CD8-positive, alpha-beta T cell (primary cell): ENCODE measurements at regions of chr1 and their contacts with region 1.

Region 1: DNA sequence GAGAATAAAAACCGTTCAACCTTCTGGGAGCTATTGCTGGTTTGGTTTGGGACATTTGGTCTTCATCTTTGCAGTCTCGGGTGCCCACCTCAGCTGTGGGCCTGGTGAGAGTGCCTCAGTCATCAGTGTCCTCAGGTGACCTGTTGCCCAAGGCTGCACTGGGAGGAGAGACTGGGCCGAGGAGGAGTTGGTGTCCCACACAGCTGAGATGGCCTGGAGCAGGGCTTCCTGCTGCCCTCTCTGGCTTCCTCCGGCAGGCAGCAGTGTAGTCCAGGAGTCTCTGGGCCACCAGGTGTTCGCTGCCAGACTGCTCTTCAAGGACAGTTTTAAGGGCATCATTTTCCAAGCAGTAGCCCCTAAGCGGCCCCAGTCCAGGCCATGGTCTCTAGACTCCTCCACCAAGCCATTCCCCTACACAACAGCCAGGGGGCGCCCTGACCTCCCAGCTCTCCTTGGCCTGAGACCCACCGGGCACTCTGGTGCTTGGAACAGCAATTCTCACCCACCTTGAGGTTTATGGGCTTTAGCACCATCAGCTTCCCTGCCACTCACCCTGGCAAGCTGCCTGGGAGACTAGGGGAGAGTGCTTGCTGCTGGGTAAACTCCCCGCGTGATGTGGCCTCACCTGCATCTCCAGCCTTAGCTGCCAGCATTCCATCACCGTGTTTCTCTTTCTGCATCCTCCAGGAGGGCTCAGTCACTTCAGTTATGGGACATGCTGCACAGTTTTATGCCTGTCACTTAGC is 9.1 kb upstream of the SYTL1 start:
- DNase-seq: peak; percentile 37 to 78 (median 64)
- ATAC-seq: peak; percentile 96
- H3K4me3 ChIP-seq: no peak overlapping the region
- H3K4me3 Mint-ChIP-seq: no peak overlapping the region
- H3K27ac ChIP-seq: no peak overlapping the region
- H3K27ac Mint-ChIP-seq: peak overlapping the region; percentile 27
- H3K4me1 ChIP-seq: peaks cover 13% of the 10 kb centered on the region
- H3K4me1 Mint-ChIP-seq: peaks cover 38% of the 10 kb centered on the region
- H3K27me3 ChIP-seq: no peaks in the 10 kb centered on the region
- H3K27me3 Mint-ChIP-seq: no peaks in the 10 kb centered on the region
- CTCF ChIP-seq: peak; percentile 86

Region 2: DNA sequence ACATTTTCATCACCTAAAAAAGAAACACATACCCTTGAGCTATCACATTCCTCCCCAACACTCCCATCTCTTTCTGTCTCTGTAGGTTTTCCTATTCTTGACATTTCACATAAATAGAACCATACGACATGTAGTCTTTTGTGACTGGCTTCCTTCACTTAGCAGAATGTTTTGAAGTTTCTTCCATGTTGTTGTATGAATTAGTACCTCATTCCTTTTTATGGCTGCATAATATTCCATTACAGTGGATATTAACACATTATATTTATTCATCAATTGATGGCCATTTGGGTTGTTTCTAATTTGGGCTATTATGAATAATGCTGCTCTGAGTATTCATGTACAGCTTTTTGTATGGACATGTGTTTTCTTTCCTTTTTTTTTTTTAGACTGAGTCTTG is 86.5 kb before region 1 on chr1:
- CTCF ChIA-PET with region 1: no interaction called
- POLR2A ChIA-PET with region 1: no interaction called
- intact Hi-C with region 1: no loop called
- DNase-seq: no peak
- ATAC-seq: no peak
- H3K4me3 ChIP-seq: no peak overlapping the region
- H3K4me3 Mint-ChIP-seq: no peak overlapping the region
- H3K27ac ChIP-seq: no peak overlapping the region
- H3K27ac Mint-ChIP-seq: peak overlapping the region; percentile 57
- H3K4me1 ChIP-seq: no peaks in the 10 kb centered on the region
- H3K4me1 Mint-ChIP-seq: peaks cover 11% of the 10 kb centered on the region
- H3K27me3 ChIP-seq: no peaks in the 10 kb centered on the region
- H3K27me3 Mint-ChIP-seq: no peaks in the 10 kb centered on the region
- CTCF ChIP-seq: no peak

Region 3: DNA sequence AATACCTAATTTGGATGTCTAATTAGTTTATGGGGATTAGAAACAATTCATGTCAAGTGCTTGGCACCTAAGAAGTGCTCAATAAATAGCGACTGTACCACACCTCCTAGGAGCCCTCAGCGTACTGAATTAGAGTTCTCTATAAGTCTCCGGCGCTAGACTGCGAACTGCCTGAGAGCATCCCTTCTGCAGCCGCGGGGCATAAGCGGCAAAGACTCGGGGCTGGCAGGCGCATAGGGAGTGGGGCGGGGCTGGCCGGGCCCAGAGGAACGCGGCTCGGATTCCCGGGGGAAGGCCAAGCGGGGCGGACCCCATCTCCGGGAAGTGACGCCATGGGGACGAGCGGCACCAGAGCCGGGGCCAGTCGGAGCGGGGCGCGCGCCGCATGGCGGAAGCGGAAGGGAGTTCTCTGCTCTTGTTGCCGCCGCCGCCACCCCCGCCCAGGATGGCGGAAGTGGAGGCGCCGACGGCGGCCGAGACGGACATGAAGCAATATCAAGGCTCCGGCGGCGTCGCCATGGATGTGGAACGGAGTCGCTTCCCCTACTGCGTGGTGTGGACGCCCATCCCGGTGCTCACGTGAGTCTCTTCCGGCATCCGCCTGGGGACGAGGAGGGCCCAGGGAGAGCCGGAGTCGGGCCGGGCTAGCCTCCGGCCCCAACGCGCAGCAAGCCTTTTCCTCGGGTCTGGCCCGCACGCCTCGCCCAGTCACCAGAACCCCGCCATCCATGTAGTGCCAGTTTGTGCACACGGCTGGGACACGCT is 10.7 kb before region 1 on chr1 and contains the start of gene TMEM222:
- CTCF ChIA-PET with region 1: interaction called, 25 read pairs
- POLR2A ChIA-PET with region 1: interaction called, 7 read pairs
- intact Hi-C with region 1: no loop called
- DNase-seq: peak; percentile 95 to 99 (median 97)
- ATAC-seq: peak; percentile 93
- H3K4me3 ChIP-seq: peak within 1 kb of the TSS; percentile 95 to 99
- H3K4me3 Mint-ChIP-seq: peak within 1 kb of the TSS; percentile 98
- H3K27ac ChIP-seq: peak within 1 kb of the TSS; percentile 88 to 95
- H3K27ac Mint-ChIP-seq: peak within 1 kb of the TSS; percentile 97
- H3K4me1 ChIP-seq: peaks cover 40% of the 10 kb centered on the region
- H3K4me1 Mint-ChIP-seq: peaks cover 48% of the 10 kb centered on the region
- H3K27me3 ChIP-seq: no peaks in the 10 kb centered on the region
- H3K27me3 Mint-ChIP-seq: no peaks in the 10 kb centered on the region
- CTCF ChIP-seq: no peak
- total RNA-seq, gene TMEM222: 24.1 to 25.2 TPM

Region 4: DNA sequence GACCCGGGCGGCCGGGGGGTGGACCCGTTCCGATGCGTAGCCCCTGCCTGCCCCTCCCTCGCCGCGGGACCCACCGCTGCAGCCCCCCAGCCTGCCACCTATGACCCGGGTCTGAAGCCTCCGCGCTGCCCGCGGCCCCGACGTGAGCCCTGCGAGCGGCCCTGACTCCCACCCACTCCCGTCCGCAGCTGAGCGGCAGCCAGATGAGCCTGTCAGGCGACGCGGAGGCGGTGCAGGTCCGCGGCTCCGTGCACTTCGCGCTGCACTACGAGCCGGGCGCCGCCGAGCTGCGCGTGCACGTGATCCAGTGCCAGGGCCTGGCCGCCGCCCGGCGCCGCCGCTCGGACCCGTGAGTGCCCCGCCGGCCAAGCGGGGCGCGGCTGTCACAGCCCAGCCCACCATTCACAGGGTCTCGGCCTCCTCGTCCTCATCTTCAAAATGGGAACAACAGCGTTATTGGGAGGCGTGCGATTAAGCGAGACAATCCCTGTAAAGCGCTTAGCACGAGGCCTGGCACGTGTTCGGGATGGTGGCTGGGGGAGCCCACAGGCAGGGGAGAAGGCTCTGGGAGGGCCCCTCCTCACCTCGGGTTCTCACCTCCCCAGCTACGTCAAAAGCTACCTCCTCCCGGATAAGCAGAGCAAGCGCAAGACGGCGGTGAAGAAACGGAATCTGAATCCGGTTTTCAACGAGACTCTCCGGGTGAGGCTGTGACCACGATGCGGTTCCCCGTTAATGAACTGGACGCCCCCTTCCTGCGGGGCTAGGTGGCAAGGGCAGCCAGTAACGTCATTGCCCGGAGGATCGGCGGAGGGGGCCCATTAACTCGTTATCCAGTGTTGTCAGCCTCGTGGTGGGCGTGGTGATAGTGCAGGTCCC is 17.3 kb after region 1 on chr1:
- CTCF ChIA-PET with region 1: interaction called, 25 read pairs
- POLR2A ChIA-PET with region 1: no interaction called
- intact Hi-C with region 1: no loop called
- DNase-seq: peak in 1 of 9 experiments; percentile 36
- ATAC-seq: peak; percentile 27
- H3K4me3 ChIP-seq: peak overlapping the region in 1 of 2 experiments; percentile 8
- H3K4me3 Mint-ChIP-seq: no peak overlapping the region
- H3K27ac ChIP-seq: no peak overlapping the region
- H3K27ac Mint-ChIP-seq: no peak overlapping the region
- H3K4me1 ChIP-seq: peaks cover 9% of the 10 kb centered on the region
- H3K4me1 Mint-ChIP-seq: peaks cover 26% of the 10 kb centered on the region
- H3K27me3 ChIP-seq: no peaks in the 10 kb centered on the region
- H3K27me3 Mint-ChIP-seq: no peaks in the 10 kb centered on the region
- CTCF ChIP-seq: no peak

Region 5: DNA sequence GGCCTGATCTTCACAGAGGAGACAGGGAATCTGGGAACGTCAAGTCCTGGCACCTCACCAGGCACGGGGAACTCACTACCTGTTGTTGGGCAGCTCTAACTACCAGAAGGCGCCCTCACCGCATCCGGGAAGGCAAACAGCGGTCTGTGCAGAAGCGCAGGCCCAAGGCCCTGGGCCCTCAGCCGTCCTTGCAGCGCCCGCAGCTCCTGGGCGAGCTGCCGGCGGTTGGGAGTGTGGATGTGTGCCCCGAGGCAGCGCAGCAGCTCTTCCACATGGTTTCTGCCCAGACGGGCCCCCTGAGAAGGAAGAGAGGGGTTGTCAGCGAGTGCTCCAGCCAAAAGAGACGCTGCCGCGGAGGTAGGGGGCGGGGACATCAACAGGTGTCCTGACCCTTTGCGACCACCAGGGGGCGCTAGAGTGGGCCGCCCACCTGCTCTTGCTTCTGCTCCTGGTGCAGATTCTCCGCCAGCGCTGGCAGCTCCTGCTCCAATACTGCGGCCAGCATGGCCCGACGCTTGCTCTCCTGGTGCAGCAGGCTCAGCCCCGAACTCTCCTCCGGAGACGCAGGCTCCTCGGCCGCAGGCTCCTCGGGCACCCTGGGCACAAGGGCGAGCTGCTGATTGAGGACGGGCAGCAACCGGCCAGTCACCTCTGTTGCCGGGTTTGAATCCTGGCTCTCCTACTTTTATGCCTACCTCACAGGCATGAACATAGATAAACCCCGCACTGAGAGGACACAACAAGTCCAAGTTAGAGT is 24.8 kb after region 1 on chr1:
- CTCF ChIA-PET with region 1: interaction called, 94 read pairs
- POLR2A ChIA-PET with region 1: interaction called, 7 read pairs
- intact Hi-C with region 1: no loop called
- DNase-seq: peak; percentile 64 to 93 (median 81)
- ATAC-seq: peak; percentile 78
- H3K4me3 ChIP-seq: peak overlapping the region; percentile 57 to 78
- H3K4me3 Mint-ChIP-seq: peak overlapping the region; percentile 86
- H3K27ac ChIP-seq: peak overlapping the region; percentile 38 to 59
- H3K27ac Mint-ChIP-seq: peak overlapping the region; percentile 89
- H3K4me1 ChIP-seq: peaks cover 46% of the 10 kb centered on the region
- H3K4me1 Mint-ChIP-seq: peaks cover 55% of the 10 kb centered on the region
- H3K27me3 ChIP-seq: no peaks in the 10 kb centered on the region
- H3K27me3 Mint-ChIP-seq: no peaks in the 10 kb centered on the region
- CTCF ChIP-seq: peak; percentile 91

Region 6: GRCh38 chr1:27365372-27366112 is 32.8 kb after region 1 on chr1:
- CTCF ChIA-PET with region 1: interaction called, 21 read pairs
- POLR2A ChIA-PET with region 1: interaction called, 3 read pairs
- intact Hi-C with region 1: no loop called
- DNase-seq: peak; percentile 62 to 85 (median 78)
- ATAC-seq: peak; percentile 78
- H3K4me3 ChIP-seq: peak overlapping the region; percentile 66 to 73
- H3K4me3 Mint-ChIP-seq: peak overlapping the region; percentile 86
- H3K27ac ChIP-seq: no peak overlapping the region
- H3K27ac Mint-ChIP-seq: no peak overlapping the region
- H3K4me1 ChIP-seq: peaks cover 17% of the 10 kb centered on the region
- H3K4me1 Mint-ChIP-seq: peaks cover 34% of the 10 kb centered on the region
- H3K27me3 ChIP-seq: no peaks in the 10 kb centered on the region
- H3K27me3 Mint-ChIP-seq: no peaks in the 10 kb centered on the region
- CTCF ChIP-seq: no peak

Region 7: DNA sequence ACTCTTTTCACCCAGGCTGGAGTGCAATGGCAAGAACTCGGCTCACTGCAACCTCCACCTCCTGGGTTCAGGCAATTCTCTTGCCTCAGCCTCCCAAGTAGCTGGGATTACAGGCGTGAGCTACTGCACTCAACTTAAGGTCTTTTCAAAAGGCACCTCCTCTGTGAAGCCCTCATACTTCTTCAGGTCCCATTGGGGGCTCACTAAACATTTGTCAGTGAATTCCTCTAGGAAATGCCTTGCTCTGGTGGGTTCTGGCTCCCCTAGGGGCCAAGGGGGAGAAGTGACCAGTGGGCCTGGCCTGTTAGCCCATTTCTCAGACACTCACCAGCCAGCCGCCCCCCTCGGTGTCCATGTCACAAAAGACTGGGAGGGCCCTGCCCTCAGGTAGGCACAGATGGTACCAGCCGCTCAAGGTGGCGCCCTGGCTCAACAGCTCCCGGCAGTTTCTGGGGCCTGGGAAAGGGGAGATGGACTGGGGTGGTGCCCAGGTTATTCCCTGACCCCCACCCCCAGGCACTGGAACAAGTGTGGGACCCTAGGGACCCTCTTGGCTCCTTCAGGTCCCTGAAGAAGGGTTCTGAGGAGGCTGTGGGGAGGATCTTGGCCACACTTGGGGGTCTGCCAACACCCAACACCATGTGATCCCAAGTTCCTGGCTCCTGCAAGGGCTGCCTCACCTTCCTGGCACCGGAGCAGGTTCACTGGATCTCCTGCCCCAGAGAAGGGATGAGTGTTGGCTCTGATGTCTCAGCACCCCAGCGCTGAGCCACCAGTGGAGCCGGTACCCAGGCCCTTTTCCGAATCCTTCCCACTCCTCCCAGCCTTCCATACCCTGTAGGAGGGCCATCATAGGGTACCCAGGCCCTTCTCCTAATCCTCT is 40.3 kb after region 1 on chr1:
- CTCF ChIA-PET with region 1: interaction called, 6 read pairs
- POLR2A ChIA-PET with region 1: no interaction called
- intact Hi-C with region 1: loop called in 1 of 2 experiments (anchors 1 kb)
- DNase-seq: peak in 1 of 9 experiments; percentile 11
- ATAC-seq: no peak
- H3K4me3 ChIP-seq: no peak overlapping the region
- H3K4me3 Mint-ChIP-seq: no peak overlapping the region
- H3K27ac ChIP-seq: no peak overlapping the region
- H3K27ac Mint-ChIP-seq: no peak overlapping the region
- H3K4me1 ChIP-seq: peaks cover 5% of the 10 kb centered on the region
- H3K4me1 Mint-ChIP-seq: peaks cover 10% of the 10 kb centered on the region
- H3K27me3 ChIP-seq: no peaks in the 10 kb centered on the region
- H3K27me3 Mint-ChIP-seq: no peaks in the 10 kb centered on the region
- CTCF ChIP-seq: no peak

Region 8: DNA sequence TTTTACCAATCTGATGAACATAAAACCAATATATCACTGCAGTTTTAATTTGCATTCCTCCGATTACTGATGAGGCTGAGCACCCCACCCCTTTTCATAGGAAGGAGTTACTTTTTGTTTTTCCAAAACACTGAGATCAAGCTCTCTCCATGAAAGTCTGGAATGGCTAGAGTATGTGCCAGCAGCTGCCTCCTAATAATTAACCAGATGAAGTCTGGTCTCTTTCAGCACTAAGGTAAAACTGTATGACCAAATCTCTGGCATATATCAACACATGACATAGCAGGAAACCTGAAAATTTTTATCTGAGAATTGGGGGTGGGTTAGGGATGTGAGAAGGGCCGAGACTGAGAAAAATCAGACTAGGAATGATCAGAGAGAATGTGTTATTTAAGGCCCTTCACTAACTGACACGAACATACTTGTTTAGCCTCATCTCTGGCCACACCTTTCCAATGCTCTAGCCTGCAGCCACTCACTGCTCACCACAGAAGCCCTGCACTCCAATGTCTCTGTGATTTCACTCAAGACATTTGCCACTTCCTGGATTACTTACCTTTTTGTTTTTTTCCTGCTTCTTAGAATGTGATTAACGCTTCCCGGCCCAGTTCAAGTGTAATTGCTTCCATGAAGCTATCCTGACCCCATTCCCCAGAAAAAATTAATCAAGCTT is 122.6 kb after region 1 on chr1:
- CTCF ChIA-PET with region 1: no interaction called
- POLR2A ChIA-PET with region 1: no interaction called
- intact Hi-C with region 1: no loop called
- DNase-seq: peak in 7 of 9 experiments; percentile 20 to 60 (median 35)
- ATAC-seq: peak; percentile 74
- H3K4me3 ChIP-seq: peak overlapping the region in 1 of 2 experiments; percentile 12
- H3K4me3 Mint-ChIP-seq: peak overlapping the region; percentile 52
- H3K27ac ChIP-seq: peak overlapping the region in 1 of 2 experiments; percentile 62
- H3K27ac Mint-ChIP-seq: peak overlapping the region; percentile 89
- H3K4me1 ChIP-seq: peaks cover 56% of the 10 kb centered on the region
- H3K4me1 Mint-ChIP-seq: peaks cover 59% of the 10 kb centered on the region
- H3K27me3 ChIP-seq: no peaks in the 10 kb centered on the region
- H3K27me3 Mint-ChIP-seq: no peaks in the 10 kb centered on the region
- CTCF ChIP-seq: no peak